IMR-90 (cell line): ENCODE measurements at regions of chr22 and their contacts with region 1.

Region 1: GRCh38 chr22:50244420-50245213 is at the start of gene TUBGCP6:
- DNase-seq: peak; percentile 91
- ATAC-seq: peak; percentile 81
- H3K4me3 ChIP-seq: peak within 1 kb of the TSS; percentile 96
- H3K27ac ChIP-seq: peak within 1 kb of the TSS; percentile 98
- H3K4me1 ChIP-seq: peaks cover 9% of the 10 kb centered on the region
- H3K27me3 ChIP-seq: no peaks in the 10 kb centered on the region
- CTCF ChIP-seq: no peak
- POLR2A ChIP-seq: peak; percentile 58
- RAD21 ChIP-seq: no peak
- total RNA-seq, gene TUBGCP6: 10.0 and 10.8 TPM in 2 replicates

Region 2: GRCh38 chr22:50341977-50342650 is 97.5 kb after region 1 on chr22:
- CTCF ChIA-PET with region 1: interaction called, 10 read pairs
- POLR2A ChIA-PET with region 1: no interaction called
- dilution Hi-C with region 1: no loop called
- in situ Hi-C with region 1: no loop called
- intact Hi-C with region 1: no loop called
- DNase-seq: peak; percentile 75
- ATAC-seq: peak; percentile 79
- H3K4me3 ChIP-seq: peak overlapping the region; percentile 57
- H3K27ac ChIP-seq: no peak overlapping the region; the same call in 1 of the 2 replicates
- H3K4me1 ChIP-seq: peaks cover 5% of the 10 kb centered on the region; the same call in 1 of the 2 replicates
- H3K27me3 ChIP-seq: no peaks in the 10 kb centered on the region
- CTCF ChIP-seq: peak; percentile 99
- POLR2A ChIP-seq: no peak
- RAD21 ChIP-seq: peak; percentile 93

Region 3: DNA sequence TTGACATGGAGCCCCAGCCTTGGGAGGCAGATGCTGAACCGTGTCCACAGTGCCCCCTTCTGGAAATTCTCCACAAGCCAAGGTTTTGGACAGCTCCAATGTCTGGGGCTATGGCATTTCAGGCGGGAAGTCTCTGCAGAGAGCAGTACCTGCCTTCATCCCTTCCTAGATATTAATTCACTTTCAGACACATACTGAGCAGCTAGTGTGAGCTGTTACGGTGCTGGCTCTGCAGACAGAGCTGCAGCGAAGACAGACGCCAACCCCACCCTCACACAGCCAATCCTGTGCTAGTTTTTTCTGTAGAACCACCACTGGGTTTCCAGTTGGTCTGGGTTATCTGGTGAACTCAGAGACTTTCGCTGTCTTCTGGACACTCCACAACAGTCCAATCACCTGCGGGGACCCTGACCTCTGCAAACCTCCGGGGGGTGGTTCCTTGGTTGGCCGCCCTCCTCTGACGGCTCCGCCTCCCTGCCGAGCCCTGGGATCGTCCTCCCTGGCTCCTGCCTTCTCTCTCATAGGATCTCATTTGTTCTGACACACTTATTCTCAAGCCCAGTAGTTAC is 253.8 kb after region 1 on chr22:
- CTCF ChIA-PET with region 1: no interaction called
- POLR2A ChIA-PET with region 1: no interaction called
- dilution Hi-C with region 1: no loop called
- in situ Hi-C with region 1: no loop called
- intact Hi-C with region 1: loop called (anchors 2 kb)
- DNase-seq: peak; percentile 51
- ATAC-seq: peak; percentile 98
- H3K4me3 ChIP-seq: no peak overlapping the region
- H3K27ac ChIP-seq: no peak overlapping the region
- H3K4me1 ChIP-seq: no peaks in the 10 kb centered on the region
- H3K27me3 ChIP-seq: peaks cover 4% of the 10 kb centered on the region
- CTCF ChIP-seq: peak; percentile 72
- POLR2A ChIP-seq: no peak
- RAD21 ChIP-seq: peak; percentile 74